ENCODE measurements at regions of chr11 and their contacts with region 1.

Region 1: GRCh38 chr11:74449369-74449931 is 17.9 kb downstream of the KCNE3 start:
- DNase-seq: peak; percentile 77
- H3K4me3 ChIP-seq: no peak overlapping the region
- CTCF ChIP-seq: peak; percentile 65

Region 2: DNA sequence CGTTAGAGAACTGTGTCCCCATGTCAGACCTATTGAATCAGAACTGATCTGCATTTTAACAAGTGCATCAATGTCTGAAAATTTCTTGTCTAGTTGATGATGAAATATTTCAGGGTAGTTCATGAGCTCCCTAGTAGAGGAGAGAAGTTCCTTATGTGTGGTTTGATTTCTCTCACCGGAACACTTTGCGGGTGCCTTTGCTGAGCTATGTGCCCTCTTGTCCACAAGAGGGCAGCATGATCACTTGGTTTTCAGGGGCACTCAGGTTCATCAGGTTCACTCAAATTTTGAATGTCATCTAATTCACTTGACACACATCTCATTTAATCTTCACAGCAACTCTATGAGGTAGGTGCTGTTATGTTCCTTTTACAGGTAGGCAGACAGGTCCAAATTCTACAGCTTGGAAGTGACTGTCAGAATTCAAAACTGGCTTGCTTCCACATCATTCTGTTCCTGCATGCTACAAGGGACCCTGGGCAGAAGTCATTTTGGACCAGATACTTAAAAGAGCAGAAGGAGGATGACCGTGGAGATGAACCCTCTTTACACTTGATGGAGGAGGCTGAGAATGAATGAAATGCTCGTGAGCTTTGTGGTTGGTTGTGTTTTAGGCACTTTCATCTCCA is 193.6 kb before region 1 on chr11:
- in situ Hi-C with region 1: loop called (anchors 25 kb)
- DNase-seq: peak; percentile 46
- H3K4me3 ChIP-seq: no peak overlapping the region
- CTCF ChIP-seq: peak; percentile 92

Measured in astrocyte of the cerebellum (primary cell).